ENCODE measurements at regions of chr5 and their contacts with region 1.

Region 1: DNA sequence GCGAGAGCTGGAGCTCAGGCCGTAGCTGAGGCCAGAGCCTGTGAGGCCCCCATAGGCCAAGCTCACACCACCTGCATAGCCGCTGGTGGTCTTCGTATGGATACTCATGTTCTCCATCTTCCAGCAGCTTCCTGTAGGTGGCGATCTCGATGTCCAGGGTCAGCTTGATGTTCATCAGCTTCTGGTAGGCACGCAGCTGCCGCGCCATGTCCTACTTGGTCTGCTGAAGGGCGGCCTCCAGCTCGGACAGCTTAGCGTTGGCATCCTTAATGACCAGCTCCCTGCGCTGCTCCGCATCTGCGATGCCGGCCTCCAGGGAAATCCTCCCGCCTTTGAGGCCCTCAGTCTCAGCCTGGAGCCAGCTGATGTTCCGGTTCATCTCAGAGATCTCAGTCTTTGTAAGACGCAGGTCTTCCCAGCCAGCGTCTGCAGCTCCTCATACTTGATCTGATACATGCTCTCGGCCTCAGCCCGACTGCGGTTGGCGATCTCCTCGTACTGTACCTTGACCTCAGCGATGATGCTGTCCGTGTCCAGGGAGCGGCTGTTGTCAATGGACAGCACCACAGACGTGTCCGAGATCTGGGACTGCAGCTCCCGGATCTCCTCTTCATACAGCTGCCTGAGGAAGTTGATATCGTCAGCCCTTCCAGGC is 172.1 kb downstream of the PPP2R2B start:
- DNase-seq: peak in 1 of 2 experiments; percentile 68
- H3K4me3 ChIP-seq: no peak overlapping the region
- H3K27ac ChIP-seq: no peak overlapping the region
- H3K4me1 ChIP-seq: peaks cover 0 to 5% (median 0%) of the 10 kb centered on the region in 4 experiments; a peak in 2 of 7 replicates
- H3K27me3 ChIP-seq: no peaks in the 10 kb centered on the region
- CTCF ChIP-seq: peak; percentile 41 to 72 (median 68)
- EP300 ChIP-seq: no peak
- POLR2A ChIP-seq: no peak
- RAD21 ChIP-seq: peak; percentile 43 to 62

Region 2: DNA sequence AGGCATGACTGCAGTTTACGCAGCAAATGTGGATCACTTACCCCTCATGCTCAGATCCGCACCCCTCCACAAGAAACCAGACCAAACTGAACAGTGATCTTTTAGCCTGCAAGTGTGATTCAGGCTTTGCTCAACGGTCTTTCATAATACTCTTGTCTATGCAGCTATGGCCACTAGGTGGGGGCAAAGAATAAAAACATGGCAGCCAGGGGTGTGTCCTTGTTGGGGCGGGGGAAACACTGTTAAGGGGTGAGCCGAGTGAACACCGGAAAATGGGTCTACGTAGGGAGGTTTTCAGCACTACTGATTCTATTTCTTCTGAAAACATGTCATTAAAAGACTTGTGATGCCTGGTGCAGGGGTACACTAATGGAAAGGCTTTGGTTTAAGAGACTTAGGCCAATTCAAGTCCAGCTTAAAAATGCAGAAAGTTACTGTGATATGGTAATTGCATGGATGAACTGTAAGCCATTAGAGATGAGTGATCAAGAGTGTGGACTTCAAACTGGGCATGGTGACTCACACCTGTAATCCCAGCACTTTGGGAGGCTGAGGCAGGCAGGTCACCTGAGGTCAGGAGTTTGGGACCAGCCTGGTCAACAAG is 140.6 kb before region 1 on chr5:
- CTCF ChIA-PET with region 1: interaction called, 10 read pairs
- POLR2A ChIA-PET with region 1: no interaction called
- DNase-seq: peak in 1 of 2 experiments; percentile 74
- H3K4me3 ChIP-seq: no peak overlapping the region
- H3K27ac ChIP-seq: no peak overlapping the region
- H3K4me1 ChIP-seq: peaks cover 0 to 7% (median 3%) of the 10 kb centered on the region in 4 experiments; a peak in 3 of 7 replicates
- H3K27me3 ChIP-seq: no peaks in the 10 kb centered on the region
- CTCF ChIP-seq: peak; percentile 47 to 86 (median 75)
- EP300 ChIP-seq: no peak
- POLR2A ChIP-seq: no peak
- RAD21 ChIP-seq: peak; percentile 80 to 89

Region 3: GRCh38 chr5:146680830-146681572 is 25.4 kb before region 1 on chr5:
- CTCF ChIA-PET with region 1: interaction called, 11 read pairs
- POLR2A ChIA-PET with region 1: no interaction called
- DNase-seq: no peak
- H3K4me3 ChIP-seq: no peak overlapping the region
- H3K27ac ChIP-seq: no peak overlapping the region
- H3K4me1 ChIP-seq: no peaks in the 10 kb centered on the region
- H3K27me3 ChIP-seq: no peaks in the 10 kb centered on the region; a peak in 1 of 7 replicates
- CTCF ChIP-seq: no peak
- EP300 ChIP-seq: no peak
- POLR2A ChIP-seq: no peak
- RAD21 ChIP-seq: no peak

Region 4: GRCh38 chr5:146718609-146719008 is 12.2 kb after region 1 on chr5:
- CTCF ChIA-PET with region 1: interaction called, 41 read pairs
- POLR2A ChIA-PET with region 1: interaction called, 5 read pairs
- DNase-seq: no peak
- H3K4me3 ChIP-seq: no peak overlapping the region
- H3K27ac ChIP-seq: no peak overlapping the region
- H3K4me1 ChIP-seq: peaks cover 0 to 3% (median 0%) of the 10 kb centered on the region in 4 experiments; a peak in 1 of 7 replicates
- H3K27me3 ChIP-seq: no peaks in the 10 kb centered on the region
- CTCF ChIP-seq: no peak
- EP300 ChIP-seq: no peak
- POLR2A ChIP-seq: no peak
- RAD21 ChIP-seq: no peak

Region 5: GRCh38 chr5:146731909-146732659 is 25.6 kb after region 1 on chr5:
- CTCF ChIA-PET with region 1: interaction called, 12 read pairs
- POLR2A ChIA-PET with region 1: no interaction called
- DNase-seq: no peak
- H3K4me3 ChIP-seq: peak overlapping the region in 1 of 4 experiments; percentile 6; a peak in 1 of 8 replicates
- H3K27ac ChIP-seq: no peak overlapping the region
- H3K4me1 ChIP-seq: no peaks in the 10 kb centered on the region; a peak in 3 of 7 replicates
- H3K27me3 ChIP-seq: no peaks in the 10 kb centered on the region
- CTCF ChIP-seq: no peak
- EP300 ChIP-seq: no peak
- POLR2A ChIP-seq: no peak
- RAD21 ChIP-seq: no peak

Region 6: DNA sequence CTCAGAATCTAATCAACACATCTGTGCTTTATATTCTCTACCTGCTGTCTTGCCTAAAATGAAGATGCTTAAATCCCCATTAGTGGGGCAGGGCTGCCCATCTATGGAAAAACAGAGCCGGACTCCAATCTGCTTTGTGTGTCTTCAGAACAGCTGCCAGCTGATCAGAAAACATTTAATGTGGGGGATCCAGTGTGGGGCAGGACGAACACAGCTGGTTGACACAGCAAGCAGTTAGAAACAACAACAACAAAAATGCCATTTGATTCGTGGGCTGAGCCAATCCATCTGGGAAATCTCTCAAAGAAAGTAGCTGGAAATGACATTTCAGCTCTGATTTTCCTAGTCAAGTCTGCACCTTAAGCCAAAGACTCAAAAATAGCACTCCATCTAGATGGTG is 72.3 kb after region 1 on chr5:
- CTCF ChIA-PET with region 1: no interaction called
- POLR2A ChIA-PET with region 1: no interaction called
- DNase-seq: no peak
- H3K4me3 ChIP-seq: no peak overlapping the region
- H3K27ac ChIP-seq: no peak overlapping the region
- H3K4me1 ChIP-seq: peaks cover 0 to 2% (median 0%) of the 10 kb centered on the region in 4 experiments; a peak in 1 of 7 replicates
- H3K27me3 ChIP-seq: no peaks in the 10 kb centered on the region
- CTCF ChIP-seq: no peak
- EP300 ChIP-seq: no peak
- POLR2A ChIP-seq: no peak
- RAD21 ChIP-seq: no peak

Region 7: DNA sequence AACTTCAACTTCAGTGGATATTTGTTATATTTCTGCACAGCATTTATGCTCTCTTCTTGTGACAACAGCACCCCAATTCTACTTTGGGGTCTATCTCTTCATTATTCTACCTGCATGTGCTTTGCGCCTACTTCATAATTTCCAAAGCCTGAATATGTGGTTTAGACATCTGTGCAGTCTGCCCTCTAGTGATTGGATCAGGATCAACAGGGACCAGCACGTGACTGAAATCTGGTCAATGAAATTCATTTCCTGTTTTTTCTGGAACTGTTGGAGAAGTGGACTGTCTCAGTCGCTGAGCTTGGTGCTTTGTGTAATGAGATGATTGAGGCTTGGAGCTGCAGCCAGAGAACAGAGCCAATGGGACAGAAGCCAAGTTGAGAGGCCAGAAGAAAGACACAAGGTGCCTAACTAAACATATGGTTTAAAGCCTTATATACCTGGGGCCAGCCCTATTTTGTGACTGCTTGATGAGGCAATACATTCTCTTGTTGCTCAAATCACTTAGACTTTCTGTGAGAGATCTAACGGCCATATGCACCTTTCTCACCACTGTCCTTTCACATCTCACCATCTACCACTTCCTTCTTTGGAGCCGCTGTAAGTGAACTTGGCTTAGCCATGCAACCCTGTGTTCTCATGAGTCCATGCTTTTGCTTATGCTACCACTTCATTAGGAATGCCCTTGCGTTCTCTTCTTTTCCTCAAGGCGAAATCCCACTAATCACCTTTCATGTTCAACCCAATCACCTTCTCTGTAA is 240.9 kb after region 1 on chr5:
- CTCF ChIA-PET with region 1: interaction called, 16 read pairs
- POLR2A ChIA-PET with region 1: no interaction called
- DNase-seq: no peak
- H3K4me3 ChIP-seq: no peak overlapping the region
- H3K27ac ChIP-seq: no peak overlapping the region
- H3K4me1 ChIP-seq: peaks cover 0 to 3% (median 1%) of the 10 kb centered on the region in 4 experiments; a peak in 3 of 7 replicates
- H3K27me3 ChIP-seq: no peaks in the 10 kb centered on the region
- CTCF ChIP-seq: peak in 2 of 3 experiments; percentile 56 to 78; a peak in 3 of 4 replicates
- EP300 ChIP-seq: no peak
- POLR2A ChIP-seq: no peak
- RAD21 ChIP-seq: peak; percentile 70 to 75